Activated CD4-positive, alpha-beta T cell treated with anti-CD3 and anti-CD28 coated beads for 36 hours (primary cell): ENCODE measurements at regions of chrX and their contacts with region 1.

Region 1: DNA sequence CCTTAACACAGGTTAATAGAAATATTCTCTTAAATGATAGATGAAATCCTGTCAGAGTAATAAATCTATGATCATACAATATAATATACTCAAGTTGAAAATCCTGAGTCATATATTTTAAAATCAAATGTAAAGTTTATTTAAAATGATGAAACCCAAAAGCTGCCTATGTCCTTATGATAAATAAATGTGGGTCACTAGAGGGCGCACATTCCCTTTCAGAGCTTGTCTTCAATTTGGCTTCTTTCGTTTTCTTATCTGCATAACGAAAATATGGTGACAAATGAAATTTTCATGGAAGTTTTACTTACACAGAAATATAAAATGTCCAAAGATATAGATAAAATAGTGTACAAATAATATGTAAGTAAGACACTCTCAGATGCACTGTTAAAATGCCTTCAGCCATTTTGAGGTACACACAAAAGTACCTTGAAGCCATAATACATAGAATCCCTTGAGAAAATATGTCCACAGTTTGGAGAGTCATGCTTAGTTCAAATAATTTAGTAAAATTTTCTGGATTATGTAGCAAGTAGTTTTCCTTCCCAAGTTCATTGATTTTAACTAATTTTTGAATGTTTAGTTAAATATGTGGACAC is 680.4 kb downstream of the DMD start:
- DNase-seq: peak; percentile 14
- ATAC-seq: no peak
- H3K4me3 Mint-ChIP-seq: no peak overlapping the region
- H3K27ac Mint-ChIP-seq: no peak overlapping the region
- H3K4me1 Mint-ChIP-seq: no peaks in the 10 kb centered on the region
- H3K27me3 Mint-ChIP-seq: no peaks in the 10 kb centered on the region

Region 2: GRCh38 chrX:33336783-33337182 is 805.9 kb after region 1 on chrX:
- CTCF ChIA-PET with region 1: no interaction called
- POLR2A ChIA-PET with region 1: no interaction called
- intact Hi-C with region 1: loop called in 1 of 2 experiments (anchors 2 kb)
- DNase-seq: peak; percentile 2
- ATAC-seq: no peak
- H3K4me3 Mint-ChIP-seq: no peak overlapping the region
- H3K27ac Mint-ChIP-seq: no peak overlapping the region
- H3K4me1 Mint-ChIP-seq: no peaks in the 10 kb centered on the region
- H3K27me3 Mint-ChIP-seq: no peaks in the 10 kb centered on the region

Region 3: DNA sequence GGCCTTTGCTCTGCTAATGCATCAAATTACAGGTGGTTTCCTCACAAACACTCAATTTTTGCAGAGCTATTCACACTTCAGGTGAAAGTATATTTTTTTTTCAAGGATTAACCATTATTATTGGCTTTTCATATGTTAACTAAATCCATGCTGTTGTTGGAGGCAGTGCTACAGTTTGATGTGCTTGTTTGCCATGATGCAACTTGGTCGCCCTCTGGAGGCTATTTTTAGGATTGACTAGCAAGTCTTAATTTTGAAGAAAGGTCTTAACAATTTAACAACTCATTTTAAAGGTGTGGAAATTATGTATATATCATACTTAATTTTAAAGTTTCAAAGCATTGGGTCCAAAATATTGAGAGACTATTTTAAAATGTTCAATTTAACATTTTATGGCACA is 1770.0 kb after region 1 on chrX:
- CTCF ChIA-PET with region 1: no interaction called
- POLR2A ChIA-PET with region 1: no interaction called
- intact Hi-C with region 1: loop called in 1 of 2 experiments (anchors 5 kb)
- DNase-seq: peak; percentile 29
- ATAC-seq: no peak
- H3K4me3 Mint-ChIP-seq: no peak overlapping the region
- H3K27ac Mint-ChIP-seq: no peak overlapping the region
- H3K4me1 Mint-ChIP-seq: no peaks in the 10 kb centered on the region
- H3K27me3 Mint-ChIP-seq: no peaks in the 10 kb centered on the region